CD14-positive monocyte (primary cell): ENCODE measurements at regions of chr13 and their contacts with region 1.

Region 1: DNA sequence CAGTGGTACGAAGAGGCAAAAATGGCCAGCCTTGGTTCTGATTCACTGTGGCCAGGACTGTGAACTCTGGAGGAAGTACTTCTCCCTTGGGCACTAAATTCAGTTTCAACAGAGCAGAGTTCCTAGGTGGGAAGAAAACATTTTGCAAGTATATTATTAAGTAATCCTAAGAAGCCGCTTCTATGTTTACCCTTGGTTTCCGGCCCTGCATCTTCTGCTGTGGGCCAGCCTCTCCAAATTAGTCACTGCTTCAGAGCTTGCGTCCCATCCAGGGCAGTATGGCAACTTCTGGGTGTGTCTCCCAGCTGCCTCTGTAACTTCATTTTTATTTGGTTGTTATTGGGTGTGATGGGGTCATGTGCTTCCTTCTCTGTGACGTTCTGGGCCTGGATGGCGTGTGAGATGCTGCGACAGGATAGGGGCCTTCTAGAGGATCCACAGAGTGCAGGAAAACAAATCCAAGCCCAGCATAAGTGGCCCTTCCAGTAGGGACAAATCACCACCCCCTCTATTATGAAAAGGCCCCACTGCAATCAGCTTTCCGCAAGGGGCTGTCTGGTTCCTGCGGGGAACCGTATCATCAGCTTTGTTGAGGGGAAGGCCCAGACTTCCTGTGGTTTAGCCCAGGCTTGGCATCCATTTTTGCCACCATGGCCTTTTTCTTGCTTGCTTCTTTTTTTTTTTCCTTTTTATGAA is 55.1 kb upstream of the C1QTNF9 start:
- DNase-seq: peak; percentile 97 to 99 (median 98)
- H3K4me3 ChIP-seq: peak overlapping the region in 1 of 3 experiments; percentile 59
- H3K4me3 Mint-ChIP-seq: peak overlapping the region; percentile 59 to 85
- H3K27ac ChIP-seq: peak overlapping the region; percentile 93 to 99
- H3K27ac Mint-ChIP-seq: peak overlapping the region; percentile 96 to 99 (median 99)
- H3K4me1 ChIP-seq: peaks cover 61 to 65% of the 10 kb centered on the region in 2 donors
- H3K4me1 Mint-ChIP-seq: peaks cover 75% of the 10 kb centered on the region
- H3K27me3 ChIP-seq: no peaks in the 10 kb centered on the region
- H3K27me3 Mint-ChIP-seq: peaks cover 0 to 6% (median 2%) of the 10 kb centered on the region in 3 donors
- CTCF ChIP-seq: no peak

Region 2: DNA sequence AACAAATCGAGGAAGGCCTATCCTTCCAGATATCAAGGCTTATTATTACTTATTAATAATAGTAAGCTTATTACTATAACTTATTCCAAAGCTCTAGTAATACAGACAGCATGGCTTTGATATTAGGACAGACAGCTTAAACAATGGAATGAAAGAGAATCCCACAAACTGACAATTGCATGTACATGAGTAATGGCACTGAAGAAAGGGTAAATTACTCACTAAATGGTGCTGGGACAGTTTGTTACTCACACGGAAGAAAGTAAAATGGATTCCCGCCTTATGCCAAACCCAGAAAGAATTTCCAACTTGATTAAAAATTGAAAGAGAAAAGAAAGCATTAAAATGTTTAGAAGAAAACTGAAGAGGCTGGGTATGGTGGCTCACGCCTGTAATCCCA is 425.4 kb before region 1 on chr13:
- intact Hi-C with region 1: no loop called
- DNase-seq: no peak
- H3K4me3 ChIP-seq: no peak overlapping the region
- H3K4me3 Mint-ChIP-seq: no peak overlapping the region
- H3K27ac ChIP-seq: no peak overlapping the region
- H3K27ac Mint-ChIP-seq: peak overlapping the region in 1 of 7 donors; percentile 30
- H3K4me1 ChIP-seq: no peaks in the 10 kb centered on the region
- H3K4me1 Mint-ChIP-seq: no peaks in the 10 kb centered on the region
- H3K27me3 ChIP-seq: no peaks in the 10 kb centered on the region
- H3K27me3 Mint-ChIP-seq: no peaks in the 10 kb centered on the region
- CTCF ChIP-seq: no peak

Region 3: GRCh38 chr13:24074701-24075100 is 179.6 kb before region 1 on chr13:
- intact Hi-C with region 1: no loop called
- DNase-seq: peak; percentile 35 to 52 (median 48)
- H3K4me3 ChIP-seq: no peak overlapping the region
- H3K4me3 Mint-ChIP-seq: no peak overlapping the region
- H3K27ac ChIP-seq: no peak overlapping the region
- H3K27ac Mint-ChIP-seq: no peak overlapping the region
- H3K4me1 ChIP-seq: peaks cover 5 to 6% of the 10 kb centered on the region in 2 donors
- H3K4me1 Mint-ChIP-seq: peaks cover 12% of the 10 kb centered on the region
- H3K27me3 ChIP-seq: no peaks in the 10 kb centered on the region
- H3K27me3 Mint-ChIP-seq: peaks cover 0 to 7% (median 4%) of the 10 kb centered on the region in 3 donors
- CTCF ChIP-seq: no peak

Region 4: DNA sequence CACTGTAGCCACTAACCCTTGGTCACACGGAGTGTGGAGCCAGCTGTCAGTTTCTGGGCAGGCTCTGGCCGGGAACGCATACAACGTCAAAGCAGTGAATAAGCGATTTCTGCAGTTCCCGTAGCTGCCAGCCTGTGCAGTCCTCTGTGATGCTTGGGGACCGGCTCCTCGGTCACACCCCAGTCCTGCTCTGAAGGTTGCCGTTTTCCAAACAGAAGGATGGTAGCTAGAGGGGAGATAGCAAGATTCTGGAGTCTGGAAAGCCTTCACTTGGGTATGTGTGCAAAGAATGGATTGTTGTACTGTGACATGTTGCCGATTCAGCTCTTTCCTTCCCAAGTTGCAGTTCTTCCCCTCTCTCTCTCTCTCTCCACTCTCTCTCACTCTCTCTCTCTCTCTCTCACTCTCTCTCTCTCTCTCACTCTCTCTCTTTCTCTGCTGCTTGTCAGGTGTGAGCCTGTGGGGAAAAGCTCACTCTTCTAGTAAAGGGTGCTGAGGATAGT is 16.4 kb after region 1 on chr13:
- intact Hi-C with region 1: loop called (anchors 2 kb)
- DNase-seq: peak; percentile 83 to 89 (median 87)
- H3K4me3 ChIP-seq: peak overlapping the region; percentile 55 to 89 (median 58)
- H3K4me3 Mint-ChIP-seq: peak overlapping the region; percentile 99 to 100
- H3K27ac ChIP-seq: peak overlapping the region; percentile 86 to 98
- H3K27ac Mint-ChIP-seq: peak overlapping the region; percentile 98 to 100 (median 99)
- H3K4me1 ChIP-seq: peaks cover 54 to 74% of the 10 kb centered on the region in 2 donors
- H3K4me1 Mint-ChIP-seq: peaks cover 58% of the 10 kb centered on the region
- H3K27me3 ChIP-seq: no peaks in the 10 kb centered on the region
- H3K27me3 Mint-ChIP-seq: peaks cover 0 to 7% (median 6%) of the 10 kb centered on the region in 3 donors
- CTCF ChIP-seq: no peak

Region 5: DNA sequence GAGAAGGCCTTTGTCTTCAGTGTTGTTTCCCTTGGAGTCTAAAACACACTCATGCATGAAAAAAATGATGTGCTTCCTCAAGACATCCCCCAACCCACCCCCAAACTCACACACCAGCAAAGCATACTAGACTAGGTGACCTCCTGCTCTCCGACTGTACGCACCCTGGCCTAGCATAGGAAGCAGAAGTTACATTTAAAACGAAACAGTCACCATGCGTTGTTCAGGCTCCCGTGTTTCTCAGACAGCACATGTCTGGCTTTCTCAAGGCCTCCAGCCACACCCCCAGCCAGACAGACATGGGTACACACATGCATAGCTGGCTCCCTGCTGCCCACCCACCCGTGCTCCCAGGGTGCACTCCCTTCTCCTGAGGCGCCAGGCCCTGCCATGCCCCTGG is 26.4 kb after region 1 on chr13:
- intact Hi-C with region 1: loop called (anchors 5 kb)
- DNase-seq: peak; percentile 80 to 89 (median 87)
- H3K4me3 ChIP-seq: peak overlapping the region in 1 of 3 experiments; percentile 20
- H3K4me3 Mint-ChIP-seq: peak overlapping the region; percentile 24 to 76
- H3K27ac ChIP-seq: peak overlapping the region; percentile 90 to 91
- H3K27ac Mint-ChIP-seq: peak overlapping the region; percentile 89 to 99 (median 97)
- H3K4me1 ChIP-seq: peaks cover 54 to 64% of the 10 kb centered on the region in 2 donors
- H3K4me1 Mint-ChIP-seq: peaks cover 65% of the 10 kb centered on the region
- H3K27me3 ChIP-seq: no peaks in the 10 kb centered on the region
- H3K27me3 Mint-ChIP-seq: no peaks in the 10 kb centered on the region
- CTCF ChIP-seq: no peak

Region 6: GRCh38 chr13:24288870-24289269 is 34.6 kb after region 1 on chr13:
- intact Hi-C with region 1: loop called (anchors 5 kb)
- DNase-seq: peak; percentile 61 to 83 (median 80)
- H3K4me3 ChIP-seq: no peak overlapping the region
- H3K4me3 Mint-ChIP-seq: no peak overlapping the region
- H3K27ac ChIP-seq: peak overlapping the region in 1 of 2 donors; percentile 71
- H3K27ac Mint-ChIP-seq: peak overlapping the region; percentile 80 to 93 (median 88)
- H3K4me1 ChIP-seq: peaks cover 24 to 30% of the 10 kb centered on the region in 2 donors
- H3K4me1 Mint-ChIP-seq: peaks cover 26% of the 10 kb centered on the region
- H3K27me3 ChIP-seq: no peaks in the 10 kb centered on the region
- H3K27me3 Mint-ChIP-seq: no peaks in the 10 kb centered on the region
- CTCF ChIP-seq: no peak